ENCODE measurements at regions of chr1 and their contacts with region 1.

Region 1: DNA sequence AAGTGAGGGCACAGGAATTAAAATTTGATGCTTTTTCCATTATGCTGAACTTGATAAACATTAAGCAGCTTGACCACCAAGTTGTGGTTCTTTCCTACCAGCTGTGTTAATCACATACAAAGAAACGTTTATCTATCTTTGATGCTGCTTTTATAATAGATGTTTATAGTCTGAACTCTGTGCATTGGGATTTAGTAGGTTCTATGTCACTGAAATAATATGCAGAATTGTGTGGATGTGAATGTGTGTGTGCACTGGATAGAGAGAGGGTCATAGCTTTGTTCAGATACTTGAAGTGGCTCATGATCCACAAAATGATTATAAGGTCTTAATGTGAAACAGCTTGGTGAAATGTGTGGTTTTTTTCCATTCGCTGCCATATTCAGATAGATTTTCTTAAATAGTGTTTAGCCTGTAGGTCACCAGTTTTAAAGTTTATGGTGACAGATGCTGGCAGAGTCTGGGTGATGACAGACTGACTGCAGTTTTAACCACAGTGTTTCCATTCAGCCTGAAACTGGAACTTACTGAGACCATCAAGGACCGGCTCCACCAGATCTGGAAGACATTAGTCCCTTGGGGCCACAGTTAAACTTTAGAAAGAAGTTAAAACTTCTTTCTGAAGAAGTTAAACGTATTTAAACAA is 10.2 kb downstream of the DDI2 start:
- DNase-seq: no peak
- H3K4me3 ChIP-seq: no peak overlapping the region
- H3K27ac ChIP-seq: peak overlapping the region in 2 of 8 donors; percentile 13 to 32
- H3K4me1 ChIP-seq: peaks cover 10 to 67% (median 50%) of the 10 kb centered on the region in 6 donors
- H3K27me3 ChIP-seq: no peaks in the 10 kb centered on the region
- CTCF ChIP-seq: no peak
- POLR2A ChIP-seq: no peak

Region 2: GRCh38 chr1:15741183-15741850 is 113.9 kb after region 1 on chr1:
- intact Hi-C with region 1: loop called (anchors 10 kb)
- DNase-seq: peak; percentile 92
- H3K4me3 ChIP-seq: no peak overlapping the region
- H3K27ac ChIP-seq: no peak overlapping the region
- H3K4me1 ChIP-seq: peaks cover 0 to 22% (median 8%) of the 10 kb centered on the region in 6 donors
- H3K27me3 ChIP-seq: no peaks in the 10 kb centered on the region
- CTCF ChIP-seq: peak; percentile 76 to 93 (median 85)
- POLR2A ChIP-seq: no peak

Region 3: GRCh38 chr1:16631248-16632043 is 1004.0 kb after region 1 on chr1:
- intact Hi-C with region 1: no loop called
- DNase-seq: peak; percentile 77
- H3K4me3 ChIP-seq: no peak overlapping the region
- H3K27ac ChIP-seq: no peak overlapping the region
- H3K4me1 ChIP-seq: peaks cover 0 to 6% (median 0%) of the 10 kb centered on the region in 6 donors
- H3K27me3 ChIP-seq: no peaks in the 10 kb centered on the region
- CTCF ChIP-seq: no peak
- POLR2A ChIP-seq: no peak